ENCODE measurements at regions of chr1 and their contacts with region 1.

Region 1: DNA sequence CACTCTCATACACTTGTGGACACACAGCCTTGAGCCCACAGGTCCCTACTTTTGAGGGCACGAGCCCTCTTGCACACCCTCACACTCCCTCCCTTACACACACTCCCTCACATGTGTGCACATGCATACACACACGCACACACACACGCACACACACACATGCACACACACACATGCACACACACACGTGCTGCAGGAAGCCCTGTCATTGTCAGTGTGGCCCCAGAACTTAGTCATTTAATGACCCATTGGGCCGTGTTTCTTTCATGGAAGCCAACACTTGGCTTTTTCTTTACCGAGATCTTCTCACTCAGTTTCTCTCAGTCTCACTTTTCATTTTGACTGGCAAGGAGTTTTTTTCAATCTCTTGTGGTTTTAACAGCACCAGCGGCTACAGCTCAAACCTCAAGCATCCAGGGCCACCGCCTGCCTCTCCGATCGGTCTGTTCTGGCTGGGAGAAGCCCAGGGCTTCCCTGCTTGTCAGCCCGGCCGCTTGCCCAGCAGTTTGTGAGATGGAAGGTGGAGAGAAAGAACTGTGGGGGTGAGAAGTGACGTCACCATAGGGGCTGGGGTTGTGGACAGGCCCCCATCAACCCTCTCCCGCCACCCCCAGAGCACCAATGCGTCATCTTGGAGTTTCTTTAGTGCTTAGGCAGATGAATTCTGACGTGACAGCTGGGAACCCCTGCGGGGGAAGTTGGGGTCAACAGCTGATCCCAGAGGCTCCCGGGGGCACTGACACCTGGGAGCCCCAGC is 15.8 kb upstream of the TNFRSF8 start:
- DNase-seq: peak; percentile 71
- H3K4me3 Mint-ChIP-seq: no peak overlapping the region
- H3K27ac Mint-ChIP-seq: no peak overlapping the region
- H3K4me1 Mint-ChIP-seq: peaks cover 18% of the 10 kb centered on the region
- H3K27me3 Mint-ChIP-seq: no peaks in the 10 kb centered on the region

Region 2: GRCh38 chr1:12059722-12060464 is 12.6 kb after region 1 on chr1:
- intact Hi-C with region 1: loop called (anchors 1 kb)
- DNase-seq: no peak
- H3K4me3 Mint-ChIP-seq: peak overlapping the region; percentile 26
- H3K27ac Mint-ChIP-seq: peak overlapping the region; percentile 84
- H3K4me1 Mint-ChIP-seq: peaks cover 86% of the 10 kb centered on the region
- H3K27me3 Mint-ChIP-seq: peaks cover 2% of the 10 kb centered on the region

Region 3: DNA sequence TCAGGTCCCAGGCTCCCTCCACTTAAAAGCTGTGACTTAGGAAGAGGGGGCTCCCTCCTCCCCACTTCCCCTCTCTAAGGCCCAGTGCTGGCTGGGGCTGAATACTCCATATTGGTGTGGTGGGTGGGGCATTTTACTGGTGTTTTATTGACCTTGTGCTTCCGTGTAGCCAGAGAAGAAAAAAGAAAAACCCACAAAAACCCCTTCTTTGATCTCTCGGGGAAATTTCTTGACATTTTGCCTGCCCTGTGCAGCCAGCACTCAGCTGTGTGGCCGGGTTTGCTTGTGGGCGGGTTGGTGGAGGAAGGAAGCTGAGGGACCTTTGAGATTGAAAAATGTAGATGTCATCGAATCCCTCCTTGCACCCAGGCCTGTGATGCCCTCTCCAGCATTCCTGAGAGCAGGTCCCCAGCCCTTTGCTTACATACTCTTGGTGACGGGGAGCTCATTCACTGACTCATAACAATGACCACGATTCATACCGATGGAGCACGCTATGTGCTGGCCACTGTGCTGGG is 40.6 kb after region 1 on chr1:
- intact Hi-C with region 1: loop called (anchors 1 kb)
- DNase-seq: peak; percentile 66
- H3K4me3 Mint-ChIP-seq: peak overlapping the region; percentile 51
- H3K27ac Mint-ChIP-seq: peak overlapping the region; percentile 95
- H3K4me1 Mint-ChIP-seq: peaks cover 58% of the 10 kb centered on the region
- H3K27me3 Mint-ChIP-seq: no peaks in the 10 kb centered on the region

Region 4: GRCh38 chr1:12113433-12114339 is 66.4 kb after region 1 on chr1:
- intact Hi-C with region 1: loop called (anchors 1 kb)
- DNase-seq: peak; percentile 15
- H3K4me3 Mint-ChIP-seq: peak overlapping the region; percentile 40
- H3K27ac Mint-ChIP-seq: peak overlapping the region; percentile 87
- H3K4me1 Mint-ChIP-seq: peaks cover 23% of the 10 kb centered on the region
- H3K27me3 Mint-ChIP-seq: peaks cover 2% of the 10 kb centered on the region

Region 5: GRCh38 chr1:13694886-13695285 is 1647.6 kb after region 1 on chr1:
- intact Hi-C with region 1: no loop called
- DNase-seq: no peak
- H3K4me3 Mint-ChIP-seq: no peak overlapping the region
- H3K27ac Mint-ChIP-seq: no peak overlapping the region
- H3K4me1 Mint-ChIP-seq: peaks cover 6% of the 10 kb centered on the region
- H3K27me3 Mint-ChIP-seq: peaks cover 35% of the 10 kb centered on the region